CD8-positive, alpha-beta T cell (primary cell): ENCODE measurements at regions of chr11 and their contacts with region 1.

Region 1: DNA sequence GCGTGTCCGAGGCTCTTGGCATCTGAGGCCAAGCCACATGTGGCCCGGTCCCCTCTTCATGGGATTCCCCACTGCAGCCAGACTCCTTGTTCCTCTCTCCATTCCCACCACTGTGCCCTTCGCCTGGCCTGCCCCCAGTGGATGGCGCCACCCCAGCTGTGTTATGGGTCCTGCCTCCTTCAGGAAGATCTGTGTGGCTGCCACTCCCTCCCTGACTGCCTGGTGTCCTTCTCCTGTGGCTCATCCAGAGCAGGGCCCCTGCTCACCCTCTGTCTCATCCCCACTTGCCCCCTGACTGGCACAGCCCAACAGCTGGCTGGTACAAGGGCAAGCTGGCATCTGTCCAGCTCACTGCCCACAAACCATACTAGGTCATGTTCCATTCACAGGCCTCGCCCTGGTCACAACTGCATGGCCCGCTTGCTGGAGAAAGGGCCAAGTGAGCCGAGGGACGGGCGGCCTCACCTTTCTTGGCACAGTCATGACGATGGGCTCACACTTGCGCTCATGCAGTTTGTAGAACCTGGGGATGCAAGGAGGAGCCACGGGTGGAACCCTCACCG is 1.9 kb upstream of the PTPRCAP start:
- DNase-seq: peak in 3 of 9 experiments; percentile 32 to 65 (median 53)
- ATAC-seq: no peak
- H3K4me3 ChIP-seq: peak overlapping the region; percentile 77 to 98
- H3K4me3 Mint-ChIP-seq: peak overlapping the region; percentile 89
- H3K27ac ChIP-seq: peak overlapping the region; percentile 34 to 67
- H3K27ac Mint-ChIP-seq: peak overlapping the region; percentile 94
- H3K4me1 ChIP-seq: peaks cover 64% of the 10 kb centered on the region
- H3K4me1 Mint-ChIP-seq: peaks cover 60% of the 10 kb centered on the region
- H3K27me3 ChIP-seq: no peaks in the 10 kb centered on the region
- H3K27me3 Mint-ChIP-seq: no peaks in the 10 kb centered on the region
- CTCF ChIP-seq: no peak

Region 2: GRCh38 chr11:67136156-67136555 is 303.2 kb before region 1 on chr11:
- CTCF ChIA-PET with region 1: no interaction called
- POLR2A ChIA-PET with region 1: no interaction called
- intact Hi-C with region 1: no loop called
- DNase-seq: no peak
- ATAC-seq: no peak
- H3K4me3 ChIP-seq: no peak overlapping the region
- H3K4me3 Mint-ChIP-seq: no peak overlapping the region
- H3K27ac ChIP-seq: no peak overlapping the region
- H3K27ac Mint-ChIP-seq: peak overlapping the region; percentile 6
- H3K4me1 ChIP-seq: no peaks in the 10 kb centered on the region
- H3K4me1 Mint-ChIP-seq: peaks cover 35% of the 10 kb centered on the region
- H3K27me3 ChIP-seq: no peaks in the 10 kb centered on the region
- H3K27me3 Mint-ChIP-seq: no peaks in the 10 kb centered on the region
- CTCF ChIP-seq: no peak

Region 3: GRCh38 chr11:67391304-67392132 is 47.9 kb before region 1 on chr11 and contains the start of gene RAD9A:
- CTCF ChIA-PET with region 1: interaction called, 6 read pairs
- POLR2A ChIA-PET with region 1: interaction called, 25 read pairs
- intact Hi-C with region 1: no loop called
- DNase-seq: peak; percentile 81 to 97 (median 93)
- ATAC-seq: peak; percentile 77
- H3K4me3 ChIP-seq: peak within 1 kb of the TSS; percentile 77 to 85
- H3K4me3 Mint-ChIP-seq: peak within 1 kb of the TSS; percentile 87
- H3K27ac ChIP-seq: peak within 1 kb of the TSS; percentile 62 to 87
- H3K27ac Mint-ChIP-seq: peak within 1 kb of the TSS; percentile 81
- H3K4me1 ChIP-seq: peaks cover 26% of the 10 kb centered on the region
- H3K4me1 Mint-ChIP-seq: peaks cover 35% of the 10 kb centered on the region
- H3K27me3 ChIP-seq: no peaks in the 10 kb centered on the region
- H3K27me3 Mint-ChIP-seq: no peaks in the 10 kb centered on the region
- CTCF ChIP-seq: no peak
- total RNA-seq, gene RAD9A: 13.7 to 14.1 TPM

Region 4: GRCh38 chr11:67420646-67421420 is 18.6 kb before region 1 on chr11:
- CTCF ChIA-PET with region 1: interaction called, 20 read pairs
- POLR2A ChIA-PET with region 1: interaction called, 317 read pairs
- intact Hi-C with region 1: loop called (anchors 1 to 2 kb)
- DNase-seq: peak; percentile 97 to 100 (median 99)
- ATAC-seq: peak; percentile 85
- H3K4me3 ChIP-seq: peak overlapping the region; percentile 49 to 50
- H3K4me3 Mint-ChIP-seq: peak overlapping the region; percentile 86
- H3K27ac ChIP-seq: peak overlapping the region; percentile 55 to 68
- H3K27ac Mint-ChIP-seq: peak overlapping the region; percentile 91
- H3K4me1 ChIP-seq: peaks cover 50% of the 10 kb centered on the region
- H3K4me1 Mint-ChIP-seq: peaks cover 47% of the 10 kb centered on the region
- H3K27me3 ChIP-seq: no peaks in the 10 kb centered on the region
- H3K27me3 Mint-ChIP-seq: no peaks in the 10 kb centered on the region
- CTCF ChIP-seq: no peak

Region 5: DNA sequence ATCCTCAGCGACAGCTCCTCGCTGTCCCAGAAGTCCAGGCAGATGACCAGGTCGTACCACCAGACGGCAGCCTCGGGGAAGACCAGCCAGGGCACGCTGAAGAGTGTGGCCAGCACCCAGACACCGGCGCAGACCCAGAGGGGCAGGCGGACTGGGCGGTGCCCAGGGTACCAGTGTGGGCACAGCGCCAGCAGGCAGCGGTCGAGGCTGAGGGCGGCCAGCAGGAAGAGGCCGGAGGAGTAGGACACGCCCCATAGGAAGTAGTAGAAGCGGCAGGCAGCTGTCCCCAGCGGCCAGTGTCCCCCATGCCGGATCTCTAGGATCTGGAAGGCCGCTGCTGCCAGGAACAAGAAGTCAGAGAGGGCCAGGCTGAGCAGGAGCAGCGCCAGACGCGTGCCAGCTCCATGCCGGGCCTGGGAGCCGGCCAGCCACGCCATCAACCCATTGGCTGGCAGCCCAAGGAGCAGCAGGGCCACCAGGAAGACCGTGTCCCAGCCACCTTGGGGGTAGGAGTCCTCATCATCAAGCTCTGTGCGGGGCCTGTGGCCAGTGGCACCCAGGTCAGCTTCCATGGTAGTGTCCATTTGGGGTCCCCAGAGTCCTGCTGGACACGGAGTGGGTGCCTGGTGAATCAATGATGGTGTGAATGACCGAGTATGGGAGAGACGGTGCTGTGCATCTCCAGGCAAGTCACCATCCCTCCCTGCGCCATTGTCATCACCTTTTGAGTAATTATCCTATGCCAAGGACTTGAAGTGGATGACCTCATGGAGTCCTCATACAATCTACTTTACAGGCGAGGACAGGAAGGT is 12.9 kb after region 1 on chr11 and contains the start of gene GPR152:
- CTCF ChIA-PET with region 1: interaction called, 12 read pairs
- POLR2A ChIA-PET with region 1: interaction called, 35 read pairs
- intact Hi-C with region 1: no loop called
- DNase-seq: peak in 1 of 9 experiments; percentile 4
- ATAC-seq: no peak
- H3K4me3 ChIP-seq: no peak within 1 kb of the TSS
- H3K4me3 Mint-ChIP-seq: no peak within 1 kb of the TSS
- H3K27ac ChIP-seq: no peak within 1 kb of the TSS
- H3K27ac Mint-ChIP-seq: no peak within 1 kb of the TSS
- H3K4me1 ChIP-seq: peaks cover 30% of the 10 kb centered on the region
- H3K4me1 Mint-ChIP-seq: peaks cover 21% of the 10 kb centered on the region
- H3K27me3 ChIP-seq: no peaks in the 10 kb centered on the region
- H3K27me3 Mint-ChIP-seq: no peaks in the 10 kb centered on the region
- CTCF ChIP-seq: no peak
- total RNA-seq, gene GPR152: not detected

Region 6: GRCh38 chr11:67482825-67483798 is 43.7 kb after region 1 on chr11 and contains the start of gene AIP:
- CTCF ChIA-PET with region 1: interaction called, 4 read pairs
- POLR2A ChIA-PET with region 1: interaction called, 65 read pairs
- intact Hi-C with region 1: loop called (anchors 2 kb)
- DNase-seq: peak; percentile 94 to 99 (median 97)
- ATAC-seq: peak; percentile 76
- H3K4me3 ChIP-seq: peak within 1 kb of the TSS; percentile 62 to 73
- H3K4me3 Mint-ChIP-seq: peak within 1 kb of the TSS; percentile 93
- H3K27ac ChIP-seq: peak within 1 kb of the TSS; percentile 81 to 89
- H3K27ac Mint-ChIP-seq: peak within 1 kb of the TSS; percentile 99
- H3K4me1 ChIP-seq: peaks cover 48% of the 10 kb centered on the region
- H3K4me1 Mint-ChIP-seq: peaks cover 54% of the 10 kb centered on the region
- H3K27me3 ChIP-seq: no peaks in the 10 kb centered on the region
- H3K27me3 Mint-ChIP-seq: no peaks in the 10 kb centered on the region
- CTCF ChIP-seq: no peak
- total RNA-seq, gene AIP: 109 to 111 TPM

Region 7: DNA sequence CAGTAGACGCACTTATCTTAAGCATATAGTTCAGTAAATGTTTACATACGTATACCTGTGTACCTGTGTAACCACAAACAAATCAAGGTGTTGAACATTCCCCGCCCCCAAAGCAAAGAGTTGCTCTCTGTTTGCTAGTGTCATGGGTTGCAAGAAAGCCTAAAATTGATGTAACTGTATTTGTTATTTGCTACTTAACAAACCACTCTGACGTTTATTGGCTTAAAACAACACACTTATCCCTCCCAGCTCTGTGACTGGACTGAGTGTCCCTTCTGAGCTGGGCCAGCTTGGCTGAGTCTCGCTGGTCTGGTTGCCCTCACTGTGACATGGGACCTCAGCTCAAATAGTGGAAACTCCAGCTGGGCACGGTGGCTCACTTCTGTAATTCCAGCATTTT is 109.2 kb after region 1 on chr11:
- CTCF ChIA-PET with region 1: no interaction called
- POLR2A ChIA-PET with region 1: no interaction called
- intact Hi-C with region 1: no loop called
- DNase-seq: no peak
- ATAC-seq: no peak
- H3K4me3 ChIP-seq: no peak overlapping the region
- H3K4me3 Mint-ChIP-seq: no peak overlapping the region
- H3K27ac ChIP-seq: no peak overlapping the region
- H3K27ac Mint-ChIP-seq: no peak overlapping the region
- H3K4me1 ChIP-seq: no peaks in the 10 kb centered on the region
- H3K4me1 Mint-ChIP-seq: no peaks in the 10 kb centered on the region
- H3K27me3 ChIP-seq: no peaks in the 10 kb centered on the region
- H3K27me3 Mint-ChIP-seq: peaks cover 3% of the 10 kb centered on the region
- CTCF ChIP-seq: no peak